Panc1 (cell line): ENCODE measurements at regions of chr9 and their contacts with region 1.

Region 1: DNA sequence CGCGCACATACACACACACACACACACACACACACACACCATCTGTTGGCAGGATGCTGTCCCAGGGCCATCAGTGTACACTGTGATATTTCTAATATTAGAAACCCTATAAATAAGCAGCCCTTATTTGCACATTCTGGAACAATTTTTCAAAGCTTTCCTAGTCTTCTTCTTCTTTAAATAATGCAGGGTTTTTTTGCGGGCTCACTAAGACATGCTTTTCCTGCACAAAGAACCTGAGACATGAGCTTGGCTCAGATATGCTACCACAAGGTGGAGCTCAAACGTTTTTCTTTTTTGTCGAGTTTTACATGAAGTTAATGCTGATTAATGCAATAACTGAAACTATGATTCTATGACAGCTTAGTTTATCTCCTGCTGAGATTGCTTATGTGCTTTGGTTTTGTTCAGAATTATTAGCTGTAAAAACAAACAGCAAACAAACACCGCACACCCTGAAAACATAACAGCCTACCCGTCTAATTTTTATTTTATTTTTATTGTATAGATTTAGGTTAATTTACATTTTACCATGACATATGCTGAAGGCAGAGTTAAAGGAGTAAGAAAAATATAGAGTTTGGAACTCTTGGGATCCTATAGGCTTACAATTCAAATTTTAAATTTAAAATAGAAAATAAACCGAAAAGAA is 95.8 kb downstream of the ALDH1A1 start:
- DNase-seq: no peak
- ATAC-seq: peak; percentile 77
- H3K4me3 ChIP-seq: no peak overlapping the region
- H3K27ac ChIP-seq: no peak overlapping the region
- H3K4me1 ChIP-seq: no peaks in the 10 kb centered on the region
- H3K27me3 ChIP-seq: no peaks in the 10 kb centered on the region
- CTCF ChIP-seq: peak; percentile 66

Region 2: GRCh38 chr9:72557549-72557948 is 299.5 kb before region 1 on chr9:
- CTCF ChIA-PET with region 1: no interaction called
- POLR2A ChIA-PET with region 1: no interaction called
- in situ Hi-C with region 1: no loop called
- intact Hi-C with region 1: no loop called
- DNase-seq: peak; percentile 85
- ATAC-seq: peak; percentile 98
- H3K4me3 ChIP-seq: no peak overlapping the region
- H3K27ac ChIP-seq: peak overlapping the region; percentile 94
- H3K4me1 ChIP-seq: peaks cover 32% of the 10 kb centered on the region
- H3K27me3 ChIP-seq: no peaks in the 10 kb centered on the region
- CTCF ChIP-seq: no peak

Region 3: GRCh38 chr9:72794947-72795346 is 62.2 kb before region 1 on chr9:
- CTCF ChIA-PET with region 1: no interaction called
- POLR2A ChIA-PET with region 1: no interaction called
- in situ Hi-C with region 1: no loop called
- intact Hi-C with region 1: no loop called
- DNase-seq: no peak
- ATAC-seq: no peak
- H3K4me3 ChIP-seq: no peak overlapping the region
- H3K27ac ChIP-seq: no peak overlapping the region
- H3K4me1 ChIP-seq: no peaks in the 10 kb centered on the region
- H3K27me3 ChIP-seq: no peaks in the 10 kb centered on the region
- CTCF ChIP-seq: no peak

Region 4: DNA sequence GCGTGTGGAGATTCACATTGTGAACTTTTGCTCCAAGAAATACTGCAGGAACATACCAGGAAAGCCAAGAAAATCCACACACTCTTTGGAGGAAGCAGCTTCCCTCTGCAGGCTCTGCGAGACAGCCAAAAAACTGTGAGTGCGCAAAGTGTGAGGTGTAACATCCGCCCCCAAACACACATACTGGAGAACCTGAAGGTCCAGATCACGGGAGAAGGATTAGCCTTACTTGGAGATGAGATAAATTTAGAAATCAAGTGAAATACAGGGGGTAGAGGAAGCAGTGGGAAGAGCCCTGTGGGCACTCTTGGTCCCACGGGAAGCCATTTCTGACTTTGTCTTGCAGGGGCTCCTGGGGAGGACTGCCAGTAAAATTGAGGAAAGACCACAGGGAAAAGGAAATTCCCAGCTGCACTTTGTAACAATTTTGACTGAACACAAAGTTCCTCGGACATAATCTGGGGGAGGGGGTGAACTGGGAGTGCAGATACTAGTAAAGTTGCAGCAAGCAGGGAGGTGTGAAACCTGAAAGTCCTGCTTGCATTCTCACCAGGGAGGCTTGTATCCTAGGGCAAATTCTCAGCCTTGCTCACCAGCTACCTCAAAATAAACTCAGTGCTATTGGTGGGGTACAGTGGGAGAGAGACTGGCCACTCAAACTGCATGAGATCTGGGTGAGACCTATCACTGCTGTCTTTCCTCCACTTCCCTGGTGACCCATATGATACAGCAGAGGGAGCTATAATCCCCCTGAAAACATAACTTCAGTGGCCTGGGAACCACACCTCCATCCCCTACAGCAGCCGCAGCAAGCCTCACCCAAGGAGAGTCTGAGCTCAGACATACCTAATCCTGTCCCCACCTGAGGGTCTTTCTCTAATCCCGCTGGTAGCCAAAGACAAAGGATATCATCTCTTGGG is 13.3 kb before region 1 on chr9:
- CTCF ChIA-PET with region 1: no interaction called
- POLR2A ChIA-PET with region 1: no interaction called
- in situ Hi-C with region 1: no loop called
- intact Hi-C with region 1: no loop called
- DNase-seq: no peak
- ATAC-seq: no peak
- H3K4me3 ChIP-seq: no peak overlapping the region
- H3K27ac ChIP-seq: no peak overlapping the region
- H3K4me1 ChIP-seq: no peaks in the 10 kb centered on the region
- H3K27me3 ChIP-seq: no peaks in the 10 kb centered on the region
- CTCF ChIP-seq: 0 out of 2 replicates have a peak, but pooled peaks have one; percentile 19

Region 5: GRCh38 chr9:73023025-73023541 is 166.0 kb after region 1 on chr9:
- CTCF ChIA-PET with region 1: interaction called, 7 read pairs
- POLR2A ChIA-PET with region 1: no interaction called
- in situ Hi-C with region 1: no loop called
- intact Hi-C with region 1: loop called (anchors 5 kb)
- DNase-seq: peak; percentile 25
- ATAC-seq: no peak
- H3K4me3 ChIP-seq: no peak overlapping the region
- H3K27ac ChIP-seq: no peak overlapping the region
- H3K4me1 ChIP-seq: no peaks in the 10 kb centered on the region
- H3K27me3 ChIP-seq: no peaks in the 10 kb centered on the region
- CTCF ChIP-seq: peak; percentile 78